ENCODE measurements at regions of chr5 and their contacts with region 1.

Region 1: GRCh38 chr5:132190161-132190817 is 37.4 kb downstream of the P4HA2 start:
- DNase-seq: peak; percentile 20
- H3K4me3 ChIP-seq: no peak overlapping the region
- H3K27ac ChIP-seq: no peak overlapping the region
- H3K4me1 ChIP-seq: no peaks in the 10 kb centered on the region
- H3K27me3 ChIP-seq: no peaks in the 10 kb centered on the region
- CTCF ChIP-seq: peak in 3 of 4 experiments; percentile 48 to 66 (median 60)
- POLR2A ChIP-seq: no peak

Region 2: DNA sequence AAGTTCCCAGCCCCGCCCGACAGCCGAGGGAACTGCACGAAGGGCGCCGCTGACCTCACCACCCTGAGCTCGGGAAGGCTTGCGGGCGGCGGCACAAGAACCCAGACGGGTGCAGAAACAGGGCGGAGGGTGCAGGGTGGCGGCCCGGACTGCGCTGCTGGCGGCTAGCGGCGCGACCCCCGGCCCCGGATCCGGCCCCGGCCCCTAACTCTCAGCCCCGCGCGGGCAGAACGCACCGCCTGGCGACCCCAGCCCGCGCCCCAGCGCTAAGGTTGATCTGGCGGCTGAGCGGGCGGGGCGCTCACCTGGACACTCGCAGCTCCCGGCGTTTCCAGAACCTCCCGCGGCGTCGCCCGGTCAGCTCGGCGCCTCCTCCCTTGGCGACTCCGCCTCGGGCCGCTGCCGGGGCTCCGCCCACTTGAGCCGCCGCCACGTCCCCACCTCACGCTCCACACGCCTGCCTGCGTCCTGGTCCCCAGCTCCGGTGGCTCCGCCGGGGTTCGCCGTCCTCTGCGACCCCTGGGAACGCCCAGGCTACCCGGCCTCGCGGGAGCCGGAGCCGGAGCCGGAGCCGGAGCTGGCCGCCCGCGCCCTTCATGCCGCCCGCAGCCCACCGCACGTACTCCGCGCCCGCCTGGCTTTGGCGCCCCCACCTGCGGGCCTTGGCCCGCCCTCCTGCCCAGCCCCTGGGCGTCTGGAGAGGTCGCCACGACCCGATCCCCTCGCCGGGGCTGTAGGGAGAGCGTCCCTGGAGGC is 37.4 kb after region 1 on chr5 and contains the start of gene P4HA2:
- intact Hi-C with region 1: loop called (anchors 5 kb)
- DNase-seq: peak; percentile 85
- H3K4me3 ChIP-seq: peak within 1 kb of the TSS; percentile 70 to 81
- H3K27ac ChIP-seq: peak within 1 kb of the TSS; percentile 84 to 88
- H3K4me1 ChIP-seq: peaks cover 7% of the 10 kb centered on the region
- H3K27me3 ChIP-seq: no peaks in the 10 kb centered on the region
- CTCF ChIP-seq: no peak
- POLR2A ChIP-seq: peak; percentile 90
- total RNA-seq, gene P4HA2: 16.8 to 18.0 TPM

Region 3: GRCh38 chr5:132576123-132576522 is 385.8 kb after region 1 on chr5:
- intact Hi-C with region 1: no loop called
- DNase-seq: no peak
- H3K4me3 ChIP-seq: no peak overlapping the region
- H3K27ac ChIP-seq: no peak overlapping the region
- H3K4me1 ChIP-seq: no peaks in the 10 kb centered on the region
- H3K27me3 ChIP-seq: no peaks in the 10 kb centered on the region
- CTCF ChIP-seq: no peak
- POLR2A ChIP-seq: no peak